Heart right ventricle (tissue), 16 donors: ENCODE measurements at regions of chr5 and their contacts with region 1.

Region 1: DNA sequence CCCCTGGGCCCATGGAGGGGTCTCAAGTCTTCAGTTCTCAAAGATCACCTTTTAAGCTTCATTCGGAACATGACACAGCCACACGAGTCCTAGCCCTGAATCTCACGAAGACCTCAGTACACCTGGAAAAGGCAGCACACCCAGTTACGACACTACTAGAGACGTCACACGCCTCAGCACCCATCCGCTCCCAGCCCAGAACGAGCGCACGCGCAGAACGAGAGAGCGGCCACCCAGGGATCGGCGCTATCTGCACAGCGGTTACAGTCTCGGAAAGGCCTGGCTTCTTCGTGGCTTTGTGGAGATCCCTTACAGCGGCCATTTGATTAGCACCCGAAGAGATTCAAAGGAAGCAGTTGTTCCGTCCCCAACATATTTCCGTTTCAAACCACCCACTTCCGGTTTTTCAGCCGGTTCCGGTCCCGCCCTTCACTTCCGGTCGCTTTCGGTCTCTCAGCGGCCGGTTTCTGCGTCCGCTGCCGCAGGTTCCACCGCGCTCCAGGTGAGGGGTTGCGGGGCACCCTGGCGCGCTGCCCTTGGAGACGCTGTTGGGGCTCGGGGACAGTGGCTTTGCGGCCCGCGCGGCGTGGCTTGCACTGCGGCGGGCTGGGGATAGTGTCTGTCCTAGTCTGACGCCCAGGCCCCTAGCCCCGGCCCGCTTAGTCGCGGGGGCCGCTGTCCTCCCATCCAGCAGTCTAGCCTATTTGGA is at the start of gene UBLCP1:
- DNase-seq: peak; percentile 79 to 85
- ATAC-seq: peak; percentile 93 to 96 (median 95)
- H3K4me3 ChIP-seq: peak within 1 kb of the TSS; percentile 66 to 98 (median 90)
- H3K27ac ChIP-seq: peak within 1 kb of the TSS; percentile 72 to 98 (median 88)
- H3K4me1 ChIP-seq: peaks cover 4 to 25% (median 21%) of the 10 kb centered on the region in 9 donors
- H3K27me3 ChIP-seq: no peaks in the 10 kb centered on the region
- CTCF ChIP-seq: peak in 1 of 9 donors; percentile 5
- total RNA-seq, gene UBLCP1: 11.6 to 17.0 (median 13.9) TPM

Region 2: DNA sequence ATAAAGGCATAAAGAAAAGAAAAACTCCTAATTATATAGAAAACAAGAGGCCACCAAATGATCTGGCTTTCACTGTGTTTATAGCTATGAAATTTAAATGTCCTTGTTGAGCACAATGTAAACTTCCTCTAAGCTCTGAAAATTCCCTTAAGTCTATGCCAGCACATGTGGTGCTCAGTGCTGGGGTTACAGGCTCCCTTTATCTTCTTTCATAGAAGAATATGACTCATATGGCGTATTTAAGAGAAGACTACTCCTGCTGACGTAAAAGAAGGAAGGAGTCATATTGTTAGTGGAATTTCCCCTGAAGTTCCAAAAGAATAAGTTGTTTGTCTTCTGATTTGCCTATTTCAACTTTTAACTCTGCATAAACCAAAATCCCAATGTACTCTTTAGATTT is 84.0 kb before region 1 on chr5:
- intact Hi-C with region 1: loop called in 1 of 10 experiments (anchors 5 kb)
- DNase-seq: no peak
- ATAC-seq: peak in 7 of 8 donors; percentile 59 to 88 (median 62)
- H3K4me3 ChIP-seq: no peak overlapping the region
- H3K27ac ChIP-seq: peak overlapping the region in 8 of 10 donors; percentile 33 to 88 (median 54)
- H3K4me1 ChIP-seq: peaks cover 3 to 100% (median 80%) of the 10 kb centered on the region in 9 donors
- H3K27me3 ChIP-seq: no peaks in the 10 kb centered on the region
- CTCF ChIP-seq: no peak